ENCODE measurements at regions of chr17 and their contacts with region 1.

Region 1: GRCh38 chr17:59964482-59965328 is at the start of gene RNFT1:
- DNase-seq: peak; percentile 86 to 94
- H3K4me3 ChIP-seq: peak within 1 kb of the TSS; percentile 71
- H3K4me3 Mint-ChIP-seq: peak within 1 kb of the TSS; percentile 73
- H3K27ac Mint-ChIP-seq: peak within 1 kb of the TSS; percentile 80
- H3K4me1 ChIP-seq: peaks cover 11% of the 10 kb centered on the region; the same call in 1 of the 2 replicates
- H3K4me1 Mint-ChIP-seq: peaks cover 6% of the 10 kb centered on the region
- H3K27me3 ChIP-seq: no peaks in the 10 kb centered on the region
- H3K27me3 Mint-ChIP-seq: no peaks in the 10 kb centered on the region
- CTCF ChIP-seq: no peak
- total RNA-seq, gene RNFT1: 26.3 and 30.5 TPM in 2 replicates

Region 2: DNA sequence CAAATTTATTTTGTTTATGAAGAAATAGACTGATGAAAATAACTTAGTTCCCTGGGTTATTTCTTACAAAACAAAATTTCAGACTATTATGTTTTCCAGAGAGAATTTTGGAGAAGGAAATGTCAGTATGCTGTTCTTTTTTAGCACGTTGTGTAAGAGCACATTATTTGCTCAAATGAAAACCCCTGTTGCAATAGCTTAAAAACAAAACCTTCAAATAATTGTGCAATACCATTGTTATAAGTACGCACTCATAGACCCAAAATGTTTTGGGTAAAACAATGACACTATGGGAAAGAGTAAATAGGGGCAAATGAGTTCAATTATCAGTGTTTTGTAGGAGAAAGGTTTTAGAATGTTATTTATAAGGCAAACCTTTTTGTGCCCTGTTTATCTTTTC is 239.0 kb before region 1 on chr17:
- CTCF ChIA-PET with region 1: no interaction called
- POLR2A ChIA-PET with region 1: no interaction called
- intact Hi-C with region 1: no loop called
- DNase-seq: no peak
- H3K4me3 ChIP-seq: no peak overlapping the region
- H3K4me3 Mint-ChIP-seq: no peak overlapping the region
- H3K27ac Mint-ChIP-seq: no peak overlapping the region
- H3K4me1 ChIP-seq: peaks cover 17% of the 10 kb centered on the region
- H3K4me1 Mint-ChIP-seq: peaks cover 18% of the 10 kb centered on the region
- H3K27me3 ChIP-seq: no peaks in the 10 kb centered on the region
- H3K27me3 Mint-ChIP-seq: no peaks in the 10 kb centered on the region
- CTCF ChIP-seq: no peak

Region 3: DNA sequence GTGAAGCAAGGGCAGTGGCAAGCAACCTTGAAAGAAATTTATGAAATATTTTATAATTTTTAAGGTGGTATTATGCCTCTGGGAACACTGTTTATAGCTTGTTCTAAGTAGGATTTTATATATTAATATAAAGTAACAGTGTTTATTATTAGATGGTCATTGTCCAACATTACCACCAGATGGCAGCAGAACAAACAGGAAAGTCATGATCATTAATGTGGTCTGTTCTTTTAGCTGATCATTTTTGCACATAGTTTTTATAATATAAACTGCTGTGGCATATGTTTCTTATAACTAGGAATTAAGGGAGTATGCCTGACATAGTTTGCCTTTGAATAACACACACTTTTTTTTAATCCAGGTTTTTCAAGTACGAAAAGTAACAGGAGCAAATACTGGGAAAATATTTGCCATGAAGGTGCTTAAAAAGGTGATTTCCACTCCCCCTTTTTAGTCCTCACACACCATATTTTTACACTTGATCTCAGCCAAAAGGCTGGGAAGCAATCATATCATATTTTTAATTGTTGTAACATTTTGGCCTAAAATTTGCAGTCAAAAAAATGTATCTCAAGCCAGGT is 50.3 kb before region 1 on chr17:
- CTCF ChIA-PET with region 1: interaction called, 14 read pairs
- POLR2A ChIA-PET with region 1: interaction called, 4 read pairs
- intact Hi-C with region 1: no loop called
- DNase-seq: peak in 1 of 2 experiments; percentile 50
- H3K4me3 ChIP-seq: no peak overlapping the region
- H3K4me3 Mint-ChIP-seq: no peak overlapping the region
- H3K27ac Mint-ChIP-seq: no peak overlapping the region
- H3K4me1 ChIP-seq: no peaks in the 10 kb centered on the region
- H3K4me1 Mint-ChIP-seq: no peaks in the 10 kb centered on the region
- H3K27me3 ChIP-seq: no peaks in the 10 kb centered on the region
- H3K27me3 Mint-ChIP-seq: no peaks in the 10 kb centered on the region
- CTCF ChIP-seq: peak; percentile 43 to 58

Region 4: GRCh38 chr17:60036796-60037612 is 72.3 kb after region 1 on chr17:
- CTCF ChIA-PET with region 1: interaction called, 14 read pairs
- POLR2A ChIA-PET with region 1: no interaction called
- intact Hi-C with region 1: loop called (anchors 5 kb)
- DNase-seq: peak; percentile 78 to 82
- H3K4me3 ChIP-seq: no peak overlapping the region
- H3K4me3 Mint-ChIP-seq: no peak overlapping the region
- H3K27ac Mint-ChIP-seq: no peak overlapping the region
- H3K4me1 ChIP-seq: no peaks in the 10 kb centered on the region; the same call in 1 of the 2 replicates
- H3K4me1 Mint-ChIP-seq: no peaks in the 10 kb centered on the region
- H3K27me3 ChIP-seq: no peaks in the 10 kb centered on the region
- H3K27me3 Mint-ChIP-seq: peaks cover 3% of the 10 kb centered on the region
- CTCF ChIP-seq: peak; percentile 89 to 97